K562 (cell line): ENCODE measurements at regions of chr10 and their contacts with region 1.

Region 1: GRCh38 chr10:73246783-73247508 is at the start of gene DNAJC9:
- DNase-seq: peak; percentile 93 to 99 (median 94)
- ATAC-seq: peak; percentile 87
- H3K4me3 ChIP-seq: peak within 1 kb of the TSS; percentile 65
- H3K27ac ChIP-seq: peak within 1 kb of the TSS; percentile 95
- H3K4me1 ChIP-seq: peaks cover 7 to 43% of the 10 kb centered on the region in 2 experiments
- H3K27me3 ChIP-seq: no peaks in the 10 kb centered on the region
- CTCF ChIP-seq: peak in 1 of 3 experiments; percentile 15; a peak in 3 of 6 replicates
- EP300 ChIP-seq: peak; percentile 46
- POLR2A ChIP-seq: peak; percentile 99
- RAD21 ChIP-seq: peak in 1 of 2 experiments; percentile 3; a peak in 3 of 4 replicates
- polyA plus RNA-seq, gene DNAJC9: 66.7 to 80.2 TPM

Region 2: GRCh38 chr10:72419241-72419640 is 827.7 kb before region 1 on chr10:
- CTCF ChIA-PET with region 1: no interaction called
- POLR2A ChIA-PET with region 1: no interaction called
- in situ Hi-C with region 1: no loop called
- intact Hi-C with region 1: no loop called
- DNase-seq: no peak
- ATAC-seq: no peak
- H3K4me3 ChIP-seq: no peak overlapping the region
- H3K27ac ChIP-seq: no peak overlapping the region
- H3K4me1 ChIP-seq: peaks cover 0 to 2% of the 10 kb centered on the region in 2 experiments; a peak in 2 of 5 replicates
- H3K27me3 ChIP-seq: no peaks in the 10 kb centered on the region
- CTCF ChIP-seq: no peak
- EP300 ChIP-seq: no peak
- POLR2A ChIP-seq: no peak
- RAD21 ChIP-seq: no peak

Region 3: GRCh38 chr10:73225518-73225917 is 21.4 kb before region 1 on chr10:
- CTCF ChIA-PET with region 1: no interaction called
- POLR2A ChIA-PET with region 1: interaction called, 13 read pairs
- in situ Hi-C with region 1: no loop called
- intact Hi-C with region 1: no loop called
- DNase-seq: no peak
- ATAC-seq: peak; percentile 40; the same call in 1 of the 3 replicates
- H3K4me3 ChIP-seq: no peak overlapping the region
- H3K27ac ChIP-seq: no peak overlapping the region
- H3K4me1 ChIP-seq: peaks cover 0 to 9% of the 10 kb centered on the region in 2 experiments; a peak in 3 of 5 replicates
- H3K27me3 ChIP-seq: no peaks in the 10 kb centered on the region
- CTCF ChIP-seq: no peak
- EP300 ChIP-seq: no peak
- POLR2A ChIP-seq: no peak
- RAD21 ChIP-seq: no peak

Region 4: GRCh38 chr10:73287441-73287840 is 40.5 kb after region 1 on chr10:
- CTCF ChIA-PET with region 1: no interaction called
- POLR2A ChIA-PET with region 1: no interaction called
- in situ Hi-C with region 1: no loop called
- intact Hi-C with region 1: no loop called
- DNase-seq: no peak
- ATAC-seq: no peak
- H3K4me3 ChIP-seq: no peak overlapping the region
- H3K27ac ChIP-seq: no peak overlapping the region
- H3K4me1 ChIP-seq: no peaks in the 10 kb centered on the region
- H3K27me3 ChIP-seq: no peaks in the 10 kb centered on the region
- CTCF ChIP-seq: no peak
- EP300 ChIP-seq: no peak
- POLR2A ChIP-seq: no peak
- RAD21 ChIP-seq: no peak

Region 5: GRCh38 chr10:73310475-73310874 is 63.5 kb after region 1 on chr10:
- CTCF ChIA-PET with region 1: no interaction called
- POLR2A ChIA-PET with region 1: no interaction called
- in situ Hi-C with region 1: no loop called
- intact Hi-C with region 1: no loop called
- DNase-seq: no peak
- ATAC-seq: no peak
- H3K4me3 ChIP-seq: no peak overlapping the region
- H3K27ac ChIP-seq: no peak overlapping the region
- H3K4me1 ChIP-seq: no peaks in the 10 kb centered on the region
- H3K27me3 ChIP-seq: no peaks in the 10 kb centered on the region
- CTCF ChIP-seq: no peak
- EP300 ChIP-seq: no peak
- POLR2A ChIP-seq: no peak
- RAD21 ChIP-seq: no peak

Region 6: DNA sequence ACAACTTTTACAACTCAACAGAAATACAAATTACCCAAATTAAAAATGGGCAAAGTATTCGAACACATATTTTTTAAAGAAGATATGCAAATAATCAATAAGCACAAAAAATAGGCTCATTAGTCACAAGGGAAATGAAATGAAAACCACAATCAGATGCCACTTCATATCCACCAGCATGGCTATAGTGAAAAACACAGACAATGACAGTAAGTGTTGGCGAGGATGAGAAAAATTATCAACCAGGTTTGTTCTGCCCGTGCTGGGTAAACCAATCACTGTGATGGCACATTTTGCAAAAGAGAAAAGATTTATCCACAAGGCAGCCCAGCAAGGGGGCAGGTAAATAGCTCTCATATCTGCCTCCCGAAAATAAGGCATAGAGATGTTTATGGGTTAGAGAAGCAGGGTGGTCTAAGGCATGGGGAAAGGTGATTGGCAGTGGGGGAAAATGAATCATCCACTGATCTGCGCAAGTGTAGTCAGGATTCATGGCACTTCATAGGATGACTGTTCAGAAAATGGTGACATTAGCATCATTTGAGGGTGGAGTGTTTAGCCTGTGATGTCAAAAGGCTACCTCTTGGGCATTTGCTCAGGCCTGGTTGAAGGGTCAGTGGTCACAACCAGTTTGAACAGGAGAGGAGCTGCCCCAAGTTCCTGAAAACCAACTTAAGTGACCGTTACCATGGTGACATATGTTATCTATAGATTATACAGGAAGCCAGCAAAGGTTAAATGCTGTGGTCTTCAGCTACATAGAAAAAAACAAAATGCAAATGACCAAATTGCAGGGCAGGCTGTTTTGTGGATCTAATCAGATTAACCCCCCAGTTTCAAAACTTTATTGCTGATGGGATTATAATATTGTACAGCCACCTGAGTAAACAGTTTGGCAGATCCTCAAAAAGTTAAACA is 119.7 kb after region 1 on chr10:
- CTCF ChIA-PET with region 1: no interaction called
- POLR2A ChIA-PET with region 1: no interaction called
- in situ Hi-C with region 1: no loop called
- intact Hi-C with region 1: loop called (anchors 5 kb)
- DNase-seq: peak; percentile 32 to 85 (median 54)
- ATAC-seq: peak; percentile 94
- H3K4me3 ChIP-seq: no peak overlapping the region
- H3K27ac ChIP-seq: peak overlapping the region; percentile 75
- H3K4me1 ChIP-seq: peaks cover 7 to 22% of the 10 kb centered on the region in 2 experiments
- H3K27me3 ChIP-seq: no peaks in the 10 kb centered on the region
- CTCF ChIP-seq: no peak
- EP300 ChIP-seq: peak; percentile 67; the same call in 1 of the 2 replicates
- POLR2A ChIP-seq: peak; percentile 42; the same call in 1 of the 2 replicates
- RAD21 ChIP-seq: no peak; a peak in 1 of 4 replicates

Region 7: GRCh38 chr10:73459683-73460314 is 212.9 kb after region 1 on chr10:
- CTCF ChIA-PET with region 1: no interaction called
- POLR2A ChIA-PET with region 1: no interaction called
- in situ Hi-C with region 1: no loop called
- intact Hi-C with region 1: loop called (anchors 5 kb)
- DNase-seq: peak in 2 of 4 experiments; percentile 17 to 32
- ATAC-seq: peak; percentile 38
- H3K4me3 ChIP-seq: no peak overlapping the region
- H3K27ac ChIP-seq: peak overlapping the region; percentile 20; the same call in 1 of the 3 replicates
- H3K4me1 ChIP-seq: peaks cover 14 to 25% of the 10 kb centered on the region in 2 experiments; a peak in 4 of 5 replicates
- H3K27me3 ChIP-seq: no peaks in the 10 kb centered on the region
- CTCF ChIP-seq: no peak
- EP300 ChIP-seq: no peak; the same call in 1 of the 2 replicates
- POLR2A ChIP-seq: no peak
- RAD21 ChIP-seq: no peak

Region 8: DNA sequence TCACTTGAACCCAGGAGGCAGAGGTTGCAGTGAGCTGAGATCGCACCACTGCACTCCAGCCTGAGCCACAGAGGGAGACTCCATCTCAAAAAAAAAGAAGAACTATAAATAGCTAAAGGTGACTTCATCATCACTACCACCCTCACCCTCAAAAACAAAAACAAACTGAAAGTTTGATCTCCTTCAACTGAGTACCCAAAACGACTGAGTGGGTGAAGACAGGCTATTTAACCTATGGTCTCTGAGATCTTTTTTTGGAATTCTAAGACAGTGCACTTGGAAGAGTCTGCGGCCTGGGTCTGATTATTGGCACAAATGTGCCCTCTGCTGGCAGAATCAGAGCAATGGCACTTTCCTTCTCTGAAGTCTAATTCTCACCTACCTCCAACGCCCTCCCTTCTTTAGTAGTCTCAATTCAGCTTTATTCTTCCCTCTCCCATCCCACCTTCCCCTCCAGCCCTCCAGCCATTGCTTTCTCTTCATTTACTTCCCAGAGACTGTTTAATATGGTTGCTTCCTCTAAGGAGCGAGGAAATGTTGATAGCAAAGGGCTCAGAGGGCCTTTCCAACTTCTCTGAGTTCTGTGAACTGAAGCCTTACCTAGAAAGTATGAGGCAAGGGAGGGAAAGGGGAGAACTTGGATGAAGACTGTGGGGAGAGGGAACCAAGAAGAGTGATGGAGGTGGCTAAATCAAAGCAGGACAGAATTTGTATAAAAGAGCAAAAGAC is 397.2 kb after region 1 on chr10:
- CTCF ChIA-PET with region 1: no interaction called
- POLR2A ChIA-PET with region 1: interaction called, 4 read pairs
- in situ Hi-C with region 1: loop called (anchors 5 kb)
- intact Hi-C with region 1: loop called (anchors 5 kb)
- DNase-seq: peak; percentile 74 to 83 (median 78)
- ATAC-seq: peak; percentile 86
- H3K4me3 ChIP-seq: no peak overlapping the region
- H3K27ac ChIP-seq: no peak overlapping the region
- H3K4me1 ChIP-seq: peaks cover 16 to 28% of the 10 kb centered on the region in 2 experiments
- H3K27me3 ChIP-seq: peaks cover 12 to 14% of the 10 kb centered on the region in 2 experiments; a peak in 4 of 5 replicates
- CTCF ChIP-seq: peak; percentile 86 to 96 (median 92)
- EP300 ChIP-seq: 0 out of 2 replicates have a peak, but pooled peaks have one; percentile 13
- POLR2A ChIP-seq: no peak
- RAD21 ChIP-seq: peak; percentile 99 to 100